Dendritic cell treated with granulocyte-macrophage colony-stimulating factor and Interleukin-4, amounts not matched to agents 40 ng/mL and 50 ng/mL, for 4 days (primary cell): ENCODE measurements at regions of chr1 and their contacts with region 1.

Region 1: DNA sequence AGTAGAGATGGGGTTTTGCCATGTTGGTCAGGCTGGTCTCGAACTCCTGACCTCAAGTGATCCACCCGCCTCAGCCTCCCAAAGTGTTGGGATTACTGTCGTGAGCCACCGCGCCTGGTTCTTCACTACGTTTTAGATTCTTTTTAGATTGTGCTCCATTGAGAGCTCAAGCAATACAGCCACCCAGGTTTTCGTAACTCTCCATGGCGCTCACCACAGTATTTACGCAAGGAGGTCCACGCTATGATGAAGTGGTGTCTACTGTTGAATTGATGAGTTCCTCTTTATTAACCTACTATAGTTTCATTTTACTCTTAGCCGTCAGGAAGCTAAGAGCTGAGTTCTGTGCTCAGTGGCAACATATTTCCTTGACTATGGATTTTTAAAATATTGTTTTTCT is 1.8 kb upstream of the KIF1B start:
- H3K4me3 Mint-ChIP-seq: peak overlapping the region; percentile 40
- H3K27ac Mint-ChIP-seq: peak overlapping the region; percentile 100
- H3K4me1 Mint-ChIP-seq: peaks cover 36% of the 10 kb centered on the region
- H3K27me3 Mint-ChIP-seq: no peaks in the 10 kb centered on the region

Region 2: DNA sequence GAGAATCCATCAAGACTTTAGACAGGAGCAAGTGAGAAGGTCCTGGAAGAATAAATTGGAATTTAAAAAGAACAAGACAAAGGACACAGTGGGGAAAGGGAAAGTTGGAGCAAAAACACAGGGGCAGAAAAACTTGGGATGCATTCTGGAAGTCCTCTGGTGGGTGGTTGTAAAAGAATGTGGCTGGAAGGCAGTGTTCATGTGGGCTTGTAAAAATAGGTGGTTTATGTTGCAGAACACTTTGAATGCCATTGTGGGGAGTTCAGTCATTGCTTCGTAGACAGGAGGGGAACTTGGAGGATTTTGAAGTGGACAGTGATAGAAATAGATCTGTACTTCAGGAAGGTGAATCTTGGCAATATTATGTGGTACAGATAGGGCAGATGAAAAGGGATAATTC is 17.0 kb after region 1 on chr1:
- intact Hi-C with region 1: no loop called
- H3K4me3 Mint-ChIP-seq: no peak overlapping the region
- H3K27ac Mint-ChIP-seq: no peak overlapping the region
- H3K4me1 Mint-ChIP-seq: peaks cover 42% of the 10 kb centered on the region
- H3K27me3 Mint-ChIP-seq: no peaks in the 10 kb centered on the region

Region 3: DNA sequence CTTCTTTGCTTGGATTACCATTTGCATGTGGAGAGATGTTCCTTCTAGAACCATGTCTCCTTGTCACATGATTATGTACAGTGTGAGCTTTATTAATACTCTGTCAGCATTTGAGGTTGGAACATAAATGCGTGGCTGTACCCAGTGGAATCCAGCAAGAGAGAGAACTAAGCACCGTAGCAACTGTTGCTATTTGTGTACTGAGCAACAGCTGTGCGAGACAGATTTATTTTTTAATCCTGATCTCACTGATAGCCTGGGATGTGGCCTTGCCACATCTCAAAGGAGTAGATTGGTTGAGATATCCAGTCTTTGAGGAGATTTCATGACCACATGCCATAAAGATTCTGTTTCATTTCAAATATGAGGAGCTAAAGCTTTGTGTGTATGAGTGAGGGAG is 45.2 kb after region 1 on chr1:
- intact Hi-C with region 1: loop called (anchors 1 kb)
- H3K4me3 Mint-ChIP-seq: no peak overlapping the region
- H3K27ac Mint-ChIP-seq: peak overlapping the region; percentile 83
- H3K4me1 Mint-ChIP-seq: peaks cover 33% of the 10 kb centered on the region
- H3K27me3 Mint-ChIP-seq: no peaks in the 10 kb centered on the region